Activated T-helper 2 cell treated with anti-CD3 and anti-CD28 coated beads, Interferon-gamma antibody, Interleukin-2, Interleukin-4, amounts not matched to agents 10 μg/mL and 5 μg/mL and 100 μg/mL, durations not matched to agents 14 hours and 24 hours and 36 hours (primary cell): ENCODE measurements at regions of chr19 and their contacts with region 1.

Region 1: GRCh38 chr19:55653758-55654539 is 886 bp upstream of the U2AF2 start:
- DNase-seq: peak; percentile 99
- H3K4me3 Mint-ChIP-seq: peak overlapping the region; percentile 91
- H3K27ac Mint-ChIP-seq: peak overlapping the region; percentile 99
- H3K4me1 Mint-ChIP-seq: peaks cover 27% of the 10 kb centered on the region
- H3K27me3 Mint-ChIP-seq: no peaks in the 10 kb centered on the region

Region 2: DNA sequence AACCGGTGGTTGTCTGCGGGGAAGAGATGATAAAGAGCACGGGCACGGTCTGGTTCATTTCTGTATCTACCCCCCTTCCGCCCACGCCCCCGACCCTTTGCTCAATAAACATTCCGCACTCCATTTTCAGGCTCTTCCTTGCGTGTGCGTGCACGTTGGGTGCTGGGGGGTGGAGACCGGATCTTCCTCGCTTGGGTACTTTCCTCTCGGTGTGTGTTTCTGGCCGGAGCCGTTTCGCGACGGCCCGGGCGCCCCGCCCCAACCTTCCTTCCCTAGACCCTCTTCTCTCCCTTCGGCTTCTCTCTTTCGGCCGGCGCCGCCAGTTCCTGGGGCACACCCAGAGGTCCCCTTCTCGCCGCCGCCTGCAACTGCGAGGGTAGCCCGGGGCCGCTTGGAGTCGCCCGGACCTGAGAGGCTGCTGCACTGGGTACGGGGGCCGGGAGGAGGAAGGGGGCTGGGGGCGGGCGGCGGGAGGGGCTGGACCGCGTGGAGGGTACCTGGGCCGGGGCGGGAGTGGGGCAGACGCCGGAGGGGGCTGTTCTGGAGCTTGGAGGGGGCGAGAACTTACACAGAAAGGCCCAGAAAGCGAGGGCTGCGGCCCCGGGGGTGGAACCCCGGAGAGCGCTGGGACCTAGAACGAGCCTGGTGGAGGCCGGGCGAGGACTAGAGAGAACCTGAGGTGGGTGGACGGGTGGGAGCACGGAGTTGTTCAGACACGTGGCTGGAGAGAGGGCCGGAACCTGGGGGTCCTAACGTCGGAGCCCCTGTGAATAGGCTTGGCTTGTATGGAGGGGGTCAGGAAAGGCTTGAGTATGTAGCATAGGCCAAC is 10.4 kb before region 1 on chr19 and contains the start of gene ZNF581:
- intact Hi-C with region 1: loop called (anchors 1 kb)
- DNase-seq: peak; percentile 77
- H3K4me3 Mint-ChIP-seq: peak within 1 kb of the TSS; percentile 99
- H3K27ac Mint-ChIP-seq: peak within 1 kb of the TSS; percentile 97
- H3K4me1 Mint-ChIP-seq: peaks cover 36% of the 10 kb centered on the region
- H3K27me3 Mint-ChIP-seq: no peaks in the 10 kb centered on the region
- total RNA-seq, gene ZNF581: 26.6 and 27.0 TPM in 2 replicates

Region 3: GRCh38 chr19:55669418-55670279 is 15.7 kb after region 1 on chr19:
- intact Hi-C with region 1: no loop called
- DNase-seq: no peak
- H3K4me3 Mint-ChIP-seq: no peak overlapping the region
- H3K27ac Mint-ChIP-seq: no peak overlapping the region
- H3K4me1 Mint-ChIP-seq: peaks cover 6% of the 10 kb centered on the region
- H3K27me3 Mint-ChIP-seq: no peaks in the 10 kb centered on the region

Region 4: GRCh38 chr19:55683449-55684261 is 29.7 kb after region 1 on chr19:
- intact Hi-C with region 1: no loop called
- DNase-seq: no peak
- H3K4me3 Mint-ChIP-seq: no peak overlapping the region
- H3K27ac Mint-ChIP-seq: no peak overlapping the region
- H3K4me1 Mint-ChIP-seq: peaks cover 5% of the 10 kb centered on the region
- H3K27me3 Mint-ChIP-seq: no peaks in the 10 kb centered on the region